A673 (cell line): ENCODE measurements at regions of chr6 and their contacts with region 1.

Region 1: GRCh38 chr6:110039364-110039980 is 61.4 kb downstream of the GPR6 start:
- DNase-seq: peak; percentile 93
- H3K4me3 ChIP-seq: peak overlapping the region; percentile 42
- H3K27ac ChIP-seq: peak overlapping the region; percentile 12
- H3K4me1 ChIP-seq: peaks cover 1% of the 10 kb centered on the region
- H3K27me3 ChIP-seq: no peaks in the 10 kb centered on the region
- CTCF ChIP-seq: peak; percentile 97

Region 2: DNA sequence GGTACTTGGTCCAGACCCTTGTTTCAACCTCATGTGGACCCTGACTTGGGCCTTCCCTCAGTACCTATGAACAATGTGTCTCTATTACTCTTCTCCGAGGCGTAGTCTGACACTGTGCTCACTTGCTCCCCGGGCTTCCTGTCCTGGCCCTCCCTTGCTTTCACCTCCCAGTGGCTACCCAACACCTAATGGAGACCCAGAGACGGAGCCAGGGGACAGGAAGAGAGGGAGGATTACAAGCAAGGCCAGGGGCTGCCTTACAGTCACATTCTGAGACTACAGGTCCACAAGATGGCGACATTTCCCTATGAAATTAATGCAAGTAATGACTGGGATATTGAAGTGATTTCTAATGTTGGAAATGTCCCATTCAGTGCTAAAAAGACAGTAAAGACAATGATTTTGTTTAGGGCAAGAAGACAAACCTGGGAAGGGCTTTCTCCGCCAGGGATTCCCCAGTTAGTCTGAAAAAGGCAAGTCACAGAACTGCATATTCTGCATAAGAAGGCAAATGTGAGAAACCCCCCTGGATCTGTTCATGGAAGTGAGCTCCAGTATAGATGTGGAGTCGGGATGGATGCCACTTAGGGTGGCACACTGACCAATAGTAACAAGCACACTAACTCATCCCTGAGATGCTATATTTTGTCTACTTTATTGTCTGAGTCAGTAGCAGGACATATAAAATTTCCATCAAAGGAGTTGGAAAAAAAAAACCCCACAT is 512.4 kb before region 1 on chr6:
- CTCF ChIA-PET with region 1: interaction called, 16 read pairs
- POLR2A ChIA-PET with region 1: no interaction called
- intact Hi-C with region 1: loop called (anchors 1 kb)
- DNase-seq: peak; percentile 83
- H3K4me3 ChIP-seq: no peak overlapping the region
- H3K27ac ChIP-seq: no peak overlapping the region
- H3K4me1 ChIP-seq: no peaks in the 10 kb centered on the region
- H3K27me3 ChIP-seq: no peaks in the 10 kb centered on the region
- CTCF ChIP-seq: peak; percentile 80

Region 3: DNA sequence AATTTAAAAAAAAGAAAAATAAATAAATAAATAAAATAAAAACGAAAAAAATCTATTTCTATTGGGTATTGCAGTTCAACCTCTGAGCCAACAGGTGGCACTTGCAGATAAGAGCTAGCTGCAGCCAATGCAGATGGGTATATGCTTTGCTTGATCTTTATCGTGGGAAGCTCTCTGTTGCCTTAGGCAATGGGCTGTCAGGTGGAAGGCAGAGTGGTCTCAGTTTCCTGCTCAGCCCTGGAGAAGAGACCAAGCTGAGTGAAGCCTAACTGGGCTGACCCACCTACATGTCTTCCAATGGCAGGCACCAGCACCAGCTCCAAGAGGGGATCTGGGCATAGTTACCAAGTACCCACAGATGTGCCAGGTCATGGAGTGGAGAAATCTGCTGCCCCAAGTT is 443.5 kb before region 1 on chr6:
- CTCF ChIA-PET with region 1: interaction called, 13 read pairs
- POLR2A ChIA-PET with region 1: no interaction called
- intact Hi-C with region 1: no loop called
- DNase-seq: peak; percentile 42
- H3K4me3 ChIP-seq: no peak overlapping the region
- H3K27ac ChIP-seq: no peak overlapping the region
- H3K4me1 ChIP-seq: no peaks in the 10 kb centered on the region
- H3K27me3 ChIP-seq: no peaks in the 10 kb centered on the region
- CTCF ChIP-seq: peak; percentile 49

Region 4: GRCh38 chr6:109690737-109691621 is 348.5 kb before region 1 on chr6 and contains the starts of genes AK9 and FIG4:
- CTCF ChIA-PET with region 1: interaction called, 14 read pairs
- POLR2A ChIA-PET with region 1: no interaction called
- intact Hi-C with region 1: no loop called
- DNase-seq: peak; percentile 96
- H3K4me3 ChIP-seq: peak within 1 kb of the TSS; percentile 77
- H3K27ac ChIP-seq: peak within 1 kb of the TSS; percentile 82
- H3K4me1 ChIP-seq: peaks cover 12% of the 10 kb centered on the region
- H3K27me3 ChIP-seq: no peaks in the 10 kb centered on the region
- CTCF ChIP-seq: 0 out of 2 replicates have a peak, but pooled peaks have one; percentile 23
- total RNA-seq, gene AK9: 2.6 TPM in 2 replicates
- total RNA-seq, gene FIG4: 10.9 and 16.5 TPM in 2 replicates

Region 5: GRCh38 chr6:109705258-109705657 is 334.2 kb before region 1 on chr6:
- CTCF ChIA-PET with region 1: interaction called, 61 read pairs
- POLR2A ChIA-PET with region 1: no interaction called
- intact Hi-C with region 1: loop called (anchors 1 kb)
- DNase-seq: peak; percentile 92
- H3K4me3 ChIP-seq: no peak overlapping the region
- H3K27ac ChIP-seq: no peak overlapping the region
- H3K4me1 ChIP-seq: peaks cover 4% of the 10 kb centered on the region
- H3K27me3 ChIP-seq: no peaks in the 10 kb centered on the region
- CTCF ChIP-seq: peak; percentile 99

Region 6: GRCh38 chr6:111985202-111985731 is 1945.8 kb after region 1 on chr6:
- CTCF ChIA-PET with region 1: no interaction called
- POLR2A ChIA-PET with region 1: no interaction called
- intact Hi-C with region 1: no loop called
- DNase-seq: no peak
- H3K4me3 ChIP-seq: no peak overlapping the region
- H3K27ac ChIP-seq: no peak overlapping the region
- H3K4me1 ChIP-seq: no peaks in the 10 kb centered on the region
- H3K27me3 ChIP-seq: no peaks in the 10 kb centered on the region
- CTCF ChIP-seq: no peak